Body of pancreas (tissue), 4 donors: ENCODE measurements at regions of chr6 and their contacts with region 1.

Region 1: DNA sequence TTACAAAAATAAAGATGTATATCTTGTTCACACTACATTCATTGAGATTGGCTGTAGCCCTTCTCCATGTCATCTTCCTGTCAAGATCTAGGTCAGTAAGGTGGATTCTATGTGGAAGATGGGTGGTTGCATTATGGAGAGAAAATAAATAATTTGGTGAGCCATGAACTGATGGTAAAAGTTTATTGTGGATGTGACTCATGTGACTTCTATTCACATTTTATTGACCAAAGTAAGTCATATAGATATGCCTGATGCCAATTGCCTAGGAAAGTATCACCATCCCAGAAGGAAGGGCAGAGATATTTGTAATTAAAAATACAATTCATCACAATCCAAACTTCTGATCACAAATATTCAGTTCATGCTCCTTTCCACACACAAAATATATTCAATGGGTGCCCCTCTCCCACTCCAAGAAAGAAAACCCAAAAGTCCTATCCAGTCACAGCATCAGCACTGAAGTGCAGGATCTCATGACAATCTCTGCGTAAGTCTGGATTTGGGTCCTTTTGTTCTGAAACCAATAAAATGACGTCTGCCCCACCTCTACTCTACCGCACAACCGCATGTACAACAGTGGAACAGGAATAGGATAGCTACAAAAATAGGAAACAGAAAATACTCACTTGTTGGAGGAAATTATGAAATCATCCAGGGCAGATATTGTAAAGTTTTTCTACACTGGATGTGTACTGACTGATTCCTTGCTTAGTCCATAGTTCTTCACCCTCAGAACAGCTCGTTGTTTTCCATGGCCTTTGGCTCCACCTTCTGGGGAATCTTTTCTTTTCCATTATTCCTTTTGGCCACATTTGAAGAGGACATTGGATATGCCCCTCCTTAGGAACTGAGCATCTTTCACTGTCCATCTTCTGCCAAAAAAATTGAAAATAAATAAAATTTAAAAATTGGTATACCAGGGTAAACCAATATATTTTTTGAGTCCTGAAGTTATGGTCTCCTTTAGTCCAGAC is 16.1 kb upstream of the SLC17A3 start:
- DNase-seq: peak; percentile 10 to 44 (median 20)
- ATAC-seq: peak; percentile 69
- H3K4me3 ChIP-seq: no peak overlapping the region
- H3K27ac ChIP-seq: no peak overlapping the region
- H3K4me1 ChIP-seq: no peaks in the 10 kb centered on the region
- H3K27me3 ChIP-seq: no peaks in the 10 kb centered on the region
- CTCF ChIP-seq: peak; percentile 14 to 68 (median 58)
- POLR2A ChIP-seq: no peak

Region 2: GRCh38 chr6:25553502-25553901 is 336.7 kb before region 1 on chr6:
- intact Hi-C with region 1: loop called (anchors 5 kb)
- DNase-seq: no peak
- ATAC-seq: no peak
- H3K4me3 ChIP-seq: no peak overlapping the region
- H3K27ac ChIP-seq: no peak overlapping the region
- H3K4me1 ChIP-seq: no peaks in the 10 kb centered on the region
- H3K27me3 ChIP-seq: no peaks in the 10 kb centered on the region
- CTCF ChIP-seq: no peak
- POLR2A ChIP-seq: no peak